ENCODE measurements at regions of chr7 and their contacts with region 1.

Region 1: DNA sequence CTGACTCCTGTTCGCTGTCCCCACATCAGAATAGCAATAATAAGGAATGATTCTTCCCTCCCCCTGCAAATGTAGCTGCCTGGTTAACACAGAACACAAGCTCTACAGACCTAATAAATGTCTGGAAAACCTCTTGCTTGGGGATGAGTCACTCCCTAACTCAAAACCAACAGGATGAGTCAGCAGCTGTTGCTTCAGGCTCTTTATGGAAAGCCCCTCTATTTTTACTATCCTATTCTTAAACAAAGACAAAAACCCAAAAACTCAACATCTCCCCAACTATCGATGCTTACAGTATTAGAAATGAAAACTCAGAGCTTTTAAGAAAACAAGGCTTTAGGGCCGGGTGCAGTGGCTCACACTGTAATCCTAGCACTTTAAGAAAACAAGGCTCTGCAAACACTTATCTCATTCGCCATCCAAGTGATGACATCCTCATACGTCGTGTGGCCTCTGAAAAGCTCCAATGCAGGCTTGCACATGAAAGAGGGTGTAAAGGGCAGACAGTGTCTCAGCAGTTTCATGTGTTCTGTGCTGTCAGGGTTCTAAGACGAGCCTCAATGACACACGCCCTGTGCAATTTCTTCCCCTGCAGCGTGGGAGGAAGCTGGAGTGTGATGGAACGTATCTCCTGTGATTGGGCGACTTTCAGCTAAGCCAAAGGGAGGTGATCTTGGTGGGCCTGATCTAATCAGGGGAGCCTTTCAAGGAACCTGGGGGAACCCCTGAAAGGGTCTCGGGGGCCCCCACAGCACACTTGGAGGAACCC is 70.1 kb downstream of the AMZ1 start:
- DNase-seq: peak; percentile 93
- H3K4me3 Mint-ChIP-seq: peak overlapping the region; percentile 57
- H3K27ac Mint-ChIP-seq: peak overlapping the region; percentile 96
- H3K4me1 Mint-ChIP-seq: peaks cover 47% of the 10 kb centered on the region
- H3K27me3 Mint-ChIP-seq: no peaks in the 10 kb centered on the region

Region 2: GRCh38 chr7:1812509-1813393 is 945.3 kb before region 1 on chr7:
- CTCF ChIA-PET with region 1: no interaction called
- POLR2A ChIA-PET with region 1: no interaction called
- intact Hi-C with region 1: no loop called
- DNase-seq: no peak
- H3K4me3 Mint-ChIP-seq: no peak overlapping the region
- H3K27ac Mint-ChIP-seq: no peak overlapping the region
- H3K4me1 Mint-ChIP-seq: no peaks in the 10 kb centered on the region
- H3K27me3 Mint-ChIP-seq: no peaks in the 10 kb centered on the region

Region 3: GRCh38 chr7:2737771-2738540 is 20.1 kb before region 1 on chr7:
- CTCF ChIA-PET with region 1: interaction called, 3 read pairs
- POLR2A ChIA-PET with region 1: no interaction called
- intact Hi-C with region 1: loop called (anchors 2 kb)
- DNase-seq: peak; percentile 4
- H3K4me3 Mint-ChIP-seq: no peak overlapping the region
- H3K27ac Mint-ChIP-seq: no peak overlapping the region
- H3K4me1 Mint-ChIP-seq: peaks cover 2% of the 10 kb centered on the region
- H3K27me3 Mint-ChIP-seq: no peaks in the 10 kb centered on the region

Region 4: DNA sequence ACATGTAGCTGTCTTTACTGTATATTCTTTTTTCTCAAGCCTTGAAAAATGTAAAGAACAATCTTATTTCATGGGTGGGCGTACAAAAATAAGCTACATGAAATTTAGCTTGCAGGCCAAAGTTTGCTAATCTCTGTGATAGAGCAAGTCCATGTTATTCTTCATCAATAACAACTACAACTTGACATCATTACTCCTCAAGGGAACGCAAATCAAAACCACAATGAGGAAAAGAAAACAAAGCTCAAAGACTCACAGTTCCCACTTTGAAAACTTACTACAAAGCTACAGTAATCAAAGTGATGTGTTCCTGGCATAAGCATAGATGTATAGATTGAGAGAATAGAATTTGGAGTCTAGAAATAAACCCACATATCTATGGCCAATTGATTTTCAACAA is 23.5 kb after region 1 on chr7:
- CTCF ChIA-PET with region 1: no interaction called
- POLR2A ChIA-PET with region 1: interaction called, 4 read pairs
- intact Hi-C with region 1: loop called (anchors 1 kb)
- DNase-seq: no peak
- H3K4me3 Mint-ChIP-seq: no peak overlapping the region
- H3K27ac Mint-ChIP-seq: no peak overlapping the region
- H3K4me1 Mint-ChIP-seq: peaks cover 24% of the 10 kb centered on the region
- H3K27me3 Mint-ChIP-seq: no peaks in the 10 kb centered on the region

Region 5: DNA sequence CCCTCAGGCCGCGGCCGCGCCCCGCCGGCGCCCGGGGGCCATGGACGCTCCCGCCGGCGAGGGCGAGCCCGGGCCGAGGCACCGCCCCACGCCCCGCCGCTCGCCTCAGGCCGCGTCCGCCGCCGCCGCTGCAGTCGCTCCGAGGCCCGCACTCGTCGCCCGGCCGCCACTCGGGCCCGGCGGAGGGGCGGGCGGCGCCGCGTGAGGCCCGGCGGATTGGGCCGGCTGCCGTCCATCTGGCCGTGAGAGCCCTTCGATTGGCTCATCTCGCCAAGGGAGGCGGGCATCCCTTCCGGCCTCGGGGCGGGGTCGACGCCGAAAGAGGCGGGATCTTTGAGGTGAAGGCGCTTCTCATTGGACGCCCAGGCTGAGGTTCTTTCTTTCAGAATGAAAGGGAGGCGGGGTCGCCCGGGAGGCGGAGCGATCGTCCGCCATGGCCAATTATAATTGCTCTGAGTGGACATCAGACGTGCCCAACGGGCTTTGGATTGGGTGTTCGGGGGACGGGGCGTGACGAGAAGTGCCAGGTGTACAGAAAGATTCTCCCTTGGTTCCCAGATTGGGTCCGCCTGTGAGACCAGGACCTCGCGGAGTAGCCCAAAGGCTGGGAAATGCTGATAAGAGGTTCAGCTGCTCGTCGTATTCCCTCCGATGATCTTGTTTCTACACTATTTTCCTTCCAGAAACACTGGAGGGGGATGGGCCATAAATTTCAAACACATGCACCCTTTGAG is 86.2 kb after region 1 on chr7 and contains the start of gene GNA12:
- CTCF ChIA-PET with region 1: no interaction called
- POLR2A ChIA-PET with region 1: no interaction called
- intact Hi-C with region 1: loop called (anchors 2 kb)
- DNase-seq: peak; percentile 99
- H3K4me3 Mint-ChIP-seq: peak within 1 kb of the TSS; percentile 74
- H3K27ac Mint-ChIP-seq: peak within 1 kb of the TSS; percentile 42
- H3K4me1 Mint-ChIP-seq: peaks cover 42% of the 10 kb centered on the region
- H3K27me3 Mint-ChIP-seq: no peaks in the 10 kb centered on the region
- total RNA-seq, gene GNA12: 23.6 to 23.7 TPM

Region 6: DNA sequence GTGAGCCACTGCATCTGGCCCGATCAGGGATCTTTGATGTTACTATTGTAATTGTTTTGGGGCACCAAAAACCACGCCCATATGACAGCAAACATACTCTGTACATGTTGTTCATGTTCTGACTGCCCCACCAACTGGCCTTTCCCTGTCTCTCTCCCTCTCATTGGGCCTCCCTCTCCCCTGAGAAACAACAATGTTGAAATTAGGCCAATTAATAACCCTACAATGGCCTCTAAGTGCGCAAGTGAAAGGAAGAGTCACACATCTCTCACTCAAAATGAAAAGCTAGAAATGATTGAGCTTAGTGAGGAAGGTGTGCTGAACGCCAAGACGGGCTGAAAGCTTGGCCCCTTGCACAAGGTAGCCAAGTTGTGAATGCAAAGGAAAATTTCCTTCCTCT is 492.6 kb after region 1 on chr7:
- CTCF ChIA-PET with region 1: no interaction called
- POLR2A ChIA-PET with region 1: no interaction called
- intact Hi-C with region 1: no loop called
- DNase-seq: peak; percentile 58
- H3K4me3 Mint-ChIP-seq: no peak overlapping the region
- H3K27ac Mint-ChIP-seq: no peak overlapping the region
- H3K4me1 Mint-ChIP-seq: peaks cover 7% of the 10 kb centered on the region
- H3K27me3 Mint-ChIP-seq: peaks cover 7% of the 10 kb centered on the region

Measured in activated CD4-positive, alpha-beta memory T cell treated with anti-CD3 and anti-CD28 coated beads for 36 hours (primary cell).